MCF 10A (cell line): ENCODE measurements at regions of chr10 and their contacts with region 1.

Region 1: DNA sequence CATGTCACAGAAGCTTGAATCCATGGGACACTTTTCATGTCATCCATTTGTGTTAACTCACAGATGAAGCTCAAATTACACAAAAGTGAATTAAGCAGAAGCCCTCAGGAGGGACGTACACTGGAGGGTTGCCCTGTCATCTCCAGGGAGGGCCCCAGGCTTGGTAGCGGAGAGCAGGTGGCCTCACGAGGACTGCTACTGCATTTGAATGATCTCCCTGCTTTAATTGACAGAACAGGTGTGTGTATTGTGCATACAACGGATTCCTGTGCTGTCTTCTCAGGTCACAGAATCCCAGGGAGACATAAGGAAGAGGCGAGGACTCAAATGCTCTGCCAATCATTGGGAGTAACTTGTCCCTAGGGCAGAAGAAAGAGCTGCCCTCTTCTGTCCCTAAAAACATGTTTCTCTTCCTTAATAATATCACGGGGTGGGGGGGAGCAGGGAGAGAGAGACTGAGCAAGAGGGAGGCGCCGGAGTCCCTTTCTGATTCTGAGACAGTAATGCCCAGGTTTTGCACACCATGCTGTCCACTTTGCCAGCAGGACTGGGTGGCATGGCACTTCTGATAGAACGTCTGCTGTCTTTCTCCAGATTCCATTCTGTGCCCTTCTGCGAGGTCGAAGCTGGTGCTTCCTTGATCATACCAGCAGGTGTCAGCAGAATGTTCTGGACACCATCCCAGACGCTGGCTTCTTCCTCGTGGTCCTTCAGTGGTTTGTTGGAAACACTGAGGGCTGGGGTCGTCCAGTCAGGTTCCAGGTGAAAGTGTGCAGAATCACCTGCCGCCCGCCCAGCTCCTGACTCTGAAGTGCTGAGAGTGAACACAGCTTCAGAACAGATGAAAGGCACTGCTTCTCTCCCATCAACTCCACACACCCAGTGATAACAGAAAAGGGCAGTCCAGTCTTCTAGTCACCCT is 26.2 kb upstream of the RASGEF1A start:
- DNase-seq: peak; percentile 65
- H3K4me3 Mint-ChIP-seq: no peak overlapping the region
- H3K27ac Mint-ChIP-seq: no peak overlapping the region
- H3K4me1 Mint-ChIP-seq: peaks cover 5% of the 10 kb centered on the region
- H3K27me3 Mint-ChIP-seq: no peaks in the 10 kb centered on the region
- CTCF ChIP-seq: peak; percentile 65

Region 2: DNA sequence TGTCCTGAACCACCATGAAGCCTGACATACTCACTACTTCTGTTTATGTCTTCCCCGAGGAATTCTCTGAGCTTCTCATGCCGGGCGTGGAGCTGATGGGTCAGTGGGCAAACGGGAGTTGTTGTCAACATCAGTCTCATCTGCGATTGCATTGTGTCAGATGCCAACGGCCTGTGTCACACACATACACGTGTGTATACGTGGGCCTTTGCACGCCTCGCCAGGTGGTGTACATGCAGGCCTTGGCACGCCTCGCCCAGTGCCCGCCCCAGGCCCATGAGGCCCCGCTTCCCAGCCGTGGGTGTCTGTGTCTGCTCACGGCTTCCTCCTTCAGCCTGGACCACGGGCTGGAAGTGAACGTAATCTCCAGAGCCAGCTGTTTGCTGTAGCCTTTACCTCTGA is 162.2 kb before region 1 on chr10:
- CTCF ChIA-PET with region 1: no interaction called
- POLR2A ChIA-PET with region 1: no interaction called
- intact Hi-C with region 1: no loop called
- DNase-seq: no peak
- H3K4me3 Mint-ChIP-seq: no peak overlapping the region
- H3K27ac Mint-ChIP-seq: no peak overlapping the region
- H3K4me1 Mint-ChIP-seq: peaks cover 21% of the 10 kb centered on the region
- H3K27me3 Mint-ChIP-seq: no peaks in the 10 kb centered on the region
- CTCF ChIP-seq: no peak

Region 3: DNA sequence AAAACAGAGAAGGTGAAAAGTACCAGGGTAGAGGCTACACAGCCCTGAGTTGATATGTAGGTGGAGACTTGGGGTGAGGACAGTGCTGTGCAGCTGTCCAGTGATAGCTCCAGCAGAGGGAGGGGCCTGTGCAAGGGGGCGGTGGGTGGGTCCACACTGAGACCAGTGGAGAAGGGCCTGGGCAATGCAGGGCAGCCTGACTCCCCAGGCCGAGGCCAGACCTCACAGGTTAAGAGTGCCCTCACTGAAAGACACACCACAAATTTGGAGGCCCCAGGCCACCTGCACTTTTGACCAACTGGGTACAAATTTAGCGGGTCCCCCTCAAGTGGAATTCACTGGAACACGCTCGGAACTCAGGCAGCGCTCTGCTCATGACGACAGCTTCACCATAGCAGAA is 19.5 kb before region 1 on chr10:
- CTCF ChIA-PET with region 1: interaction called, 14 read pairs
- POLR2A ChIA-PET with region 1: interaction called, 4 read pairs
- intact Hi-C with region 1: no loop called
- DNase-seq: no peak
- H3K4me3 Mint-ChIP-seq: no peak overlapping the region
- H3K27ac Mint-ChIP-seq: no peak overlapping the region
- H3K4me1 Mint-ChIP-seq: no peaks in the 10 kb centered on the region
- H3K27me3 Mint-ChIP-seq: peaks cover 69% of the 10 kb centered on the region
- CTCF ChIP-seq: no peak

Region 4: DNA sequence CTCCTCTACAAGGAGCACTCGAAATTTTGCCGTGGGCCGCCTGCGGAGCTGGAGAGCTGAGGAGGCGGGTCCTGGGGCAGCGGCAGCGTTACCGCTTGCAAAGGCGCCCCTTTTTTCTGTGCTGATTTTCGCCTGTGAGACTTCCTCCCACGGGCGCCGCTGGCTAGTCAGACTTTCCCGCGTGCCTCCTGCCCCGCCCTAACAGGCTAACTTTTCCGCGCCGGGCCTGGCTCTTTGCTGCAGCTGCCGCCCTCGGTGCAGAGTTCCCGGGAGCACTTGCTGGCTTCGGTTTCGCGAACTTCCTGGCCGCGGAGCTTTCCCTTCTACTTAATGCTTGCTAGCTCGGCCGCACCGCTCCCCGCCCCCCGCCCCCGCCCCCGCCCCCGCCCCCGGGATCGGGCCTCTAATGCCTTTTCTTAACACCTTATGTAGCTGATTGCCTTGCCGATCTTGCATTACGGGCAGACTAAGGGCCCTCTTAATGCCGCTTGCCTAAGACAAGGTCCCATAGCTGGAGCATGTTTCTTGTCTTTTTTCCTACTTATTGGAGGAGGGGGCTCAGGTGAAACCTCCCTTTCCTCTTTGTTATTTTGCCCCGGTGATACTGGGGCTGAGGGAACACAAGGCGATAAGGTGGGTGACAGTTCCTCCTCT is 11.8 kb after region 1 on chr10:
- CTCF ChIA-PET with region 1: interaction called, 30 read pairs
- POLR2A ChIA-PET with region 1: interaction called, 3 read pairs
- intact Hi-C with region 1: no loop called
- DNase-seq: peak; percentile 28
- H3K4me3 Mint-ChIP-seq: peak overlapping the region; percentile 52
- H3K27ac Mint-ChIP-seq: no peak overlapping the region
- H3K4me1 Mint-ChIP-seq: no peaks in the 10 kb centered on the region
- H3K27me3 Mint-ChIP-seq: peaks cover 32% of the 10 kb centered on the region
- CTCF ChIP-seq: no peak

Region 5: GRCh38 chr10:43322769-43323168 is 29.8 kb after region 1 on chr10:
- CTCF ChIA-PET with region 1: interaction called, 17 read pairs
- POLR2A ChIA-PET with region 1: no interaction called
- intact Hi-C with region 1: no loop called
- DNase-seq: peak; percentile 16
- H3K4me3 Mint-ChIP-seq: no peak overlapping the region
- H3K27ac Mint-ChIP-seq: no peak overlapping the region
- H3K4me1 Mint-ChIP-seq: no peaks in the 10 kb centered on the region
- H3K27me3 Mint-ChIP-seq: no peaks in the 10 kb centered on the region
- CTCF ChIP-seq: no peak

Region 6: GRCh38 chr10:43340619-43341018 is 47.6 kb after region 1 on chr10:
- CTCF ChIA-PET with region 1: interaction called, 32 read pairs
- POLR2A ChIA-PET with region 1: interaction called, 4 read pairs
- intact Hi-C with region 1: no loop called
- DNase-seq: peak; percentile 89
- H3K4me3 Mint-ChIP-seq: no peak overlapping the region
- H3K27ac Mint-ChIP-seq: peak overlapping the region; percentile 25
- H3K4me1 Mint-ChIP-seq: peaks cover 26% of the 10 kb centered on the region
- H3K27me3 Mint-ChIP-seq: no peaks in the 10 kb centered on the region
- CTCF ChIP-seq: no peak

Region 7: DNA sequence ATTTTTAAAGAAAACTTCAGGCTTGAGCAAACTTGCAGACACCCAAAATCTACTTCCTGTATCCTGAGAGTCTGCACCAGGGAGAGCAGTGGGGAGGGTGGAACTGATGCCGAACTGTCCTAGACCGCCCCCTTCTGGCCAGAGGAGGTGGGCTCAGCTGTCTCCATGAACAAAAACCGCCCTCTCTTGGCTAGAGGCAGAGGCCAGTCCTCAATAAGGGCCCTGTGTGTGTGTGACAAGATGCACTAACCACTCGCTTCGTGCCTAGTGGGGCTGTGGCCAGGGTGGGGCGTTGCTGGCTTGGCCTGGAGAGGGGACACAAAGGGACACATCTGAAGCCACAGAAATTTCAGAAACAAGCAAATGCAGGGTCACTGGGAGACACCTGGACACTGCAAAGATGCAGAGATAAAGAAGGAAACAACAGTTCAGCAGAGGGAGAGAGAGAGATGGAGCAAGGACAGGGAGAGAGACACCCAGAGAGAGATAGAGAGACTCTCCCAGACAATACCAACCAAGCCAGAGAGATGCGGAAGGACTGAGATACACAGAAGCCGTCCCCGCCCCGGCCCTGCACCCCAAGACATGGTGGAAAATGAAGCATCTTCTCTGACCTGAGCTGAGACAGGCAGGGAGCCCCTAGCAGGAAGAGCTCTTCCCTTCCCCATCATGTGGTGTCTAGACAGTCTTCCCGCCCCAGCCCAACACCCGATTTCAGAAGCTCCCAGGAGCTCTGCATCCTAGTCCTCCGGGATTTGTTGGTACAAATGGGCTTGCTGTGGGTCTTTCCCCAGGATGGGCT is 55.7 kb after region 1 on chr10:
- CTCF ChIA-PET with region 1: interaction called, 117 read pairs
- POLR2A ChIA-PET with region 1: interaction called, 5 read pairs
- intact Hi-C with region 1: loop called (anchors 1 kb)
- DNase-seq: peak; percentile 82
- H3K4me3 Mint-ChIP-seq: no peak overlapping the region
- H3K27ac Mint-ChIP-seq: no peak overlapping the region
- H3K4me1 Mint-ChIP-seq: peaks cover 9% of the 10 kb centered on the region
- H3K27me3 Mint-ChIP-seq: no peaks in the 10 kb centered on the region
- CTCF ChIP-seq: peak; percentile 92

Region 8: GRCh38 chr10:43461950-43462349 is 168.9 kb after region 1 on chr10:
- CTCF ChIA-PET with region 1: interaction called, 49 read pairs
- POLR2A ChIA-PET with region 1: no interaction called
- intact Hi-C with region 1: loop called (anchors 1 kb)
- DNase-seq: peak; percentile 83
- H3K4me3 Mint-ChIP-seq: no peak overlapping the region
- H3K27ac Mint-ChIP-seq: no peak overlapping the region
- H3K4me1 Mint-ChIP-seq: no peaks in the 10 kb centered on the region
- H3K27me3 Mint-ChIP-seq: no peaks in the 10 kb centered on the region
- CTCF ChIP-seq: peak; percentile 76